ENCODE measurements at regions of chr2 and their contacts with region 1.

Region 1: DNA sequence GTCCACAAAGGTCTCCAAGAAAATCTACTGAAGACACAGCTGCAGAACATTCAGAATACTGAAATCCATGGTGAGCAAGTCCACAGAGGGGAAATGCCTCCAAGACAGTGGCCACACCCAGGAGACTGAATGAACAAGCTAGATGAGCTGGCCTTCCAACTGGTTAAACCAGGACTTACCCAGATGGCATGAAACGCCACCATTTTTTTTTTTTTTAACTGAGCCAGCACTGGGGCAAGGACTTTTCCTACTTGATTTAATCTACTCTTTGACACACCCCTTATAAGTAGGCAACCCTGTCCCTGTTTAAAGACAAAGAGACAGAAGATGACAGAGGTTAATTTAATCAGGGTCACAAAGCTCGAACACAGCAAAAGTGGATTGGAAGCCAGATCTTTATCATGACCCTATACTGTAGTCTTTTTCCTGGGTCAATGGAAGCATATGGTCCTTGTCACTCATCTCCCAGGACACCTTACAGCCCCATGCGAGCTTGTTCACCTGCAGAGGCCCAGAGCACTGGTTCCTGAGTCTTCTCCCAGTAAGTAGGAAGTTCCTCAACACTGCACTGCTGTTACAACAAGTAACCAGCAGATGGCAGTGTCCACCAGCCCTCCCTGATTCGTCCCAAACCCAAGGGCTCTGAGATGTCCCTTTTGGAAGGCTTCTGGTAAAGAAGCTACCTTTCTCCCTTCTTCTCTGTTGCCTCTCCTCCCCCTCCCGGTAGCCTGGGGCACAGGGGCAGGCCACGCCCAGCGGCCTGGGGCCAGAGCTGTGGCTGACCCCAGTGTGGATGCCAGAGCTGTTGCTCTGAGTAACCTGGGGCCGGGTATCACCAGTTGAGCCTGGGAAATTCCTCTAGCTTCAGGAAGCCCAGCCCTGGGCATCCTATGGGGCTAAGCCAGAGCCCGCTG is 5.6 kb upstream of the GDF7 start:
- DNase-seq: no peak
- H3K4me3 ChIP-seq: no peak overlapping the region
- H3K27me3 ChIP-seq: peaks cover 36% of the 10 kb centered on the region
- CTCF ChIP-seq: peak; percentile 96

Region 2: GRCh38 chr2:20304411-20304810 is 356.9 kb before region 1 on chr2:
- CTCF ChIA-PET with region 1: no interaction called
- POLR2A ChIA-PET with region 1: no interaction called
- DNase-seq: no peak
- H3K4me3 ChIP-seq: no peak overlapping the region
- H3K27me3 ChIP-seq: no peaks in the 10 kb centered on the region
- CTCF ChIP-seq: no peak

Region 3: GRCh38 chr2:20617892-20618467 is 43.3 kb before region 1 on chr2:
- CTCF ChIA-PET with region 1: no interaction called
- POLR2A ChIA-PET with region 1: no interaction called
- DNase-seq: peak; percentile 90
- H3K4me3 ChIP-seq: no peak overlapping the region
- H3K27me3 ChIP-seq: no peaks in the 10 kb centered on the region
- CTCF ChIP-seq: peak; percentile 58

Region 4: DNA sequence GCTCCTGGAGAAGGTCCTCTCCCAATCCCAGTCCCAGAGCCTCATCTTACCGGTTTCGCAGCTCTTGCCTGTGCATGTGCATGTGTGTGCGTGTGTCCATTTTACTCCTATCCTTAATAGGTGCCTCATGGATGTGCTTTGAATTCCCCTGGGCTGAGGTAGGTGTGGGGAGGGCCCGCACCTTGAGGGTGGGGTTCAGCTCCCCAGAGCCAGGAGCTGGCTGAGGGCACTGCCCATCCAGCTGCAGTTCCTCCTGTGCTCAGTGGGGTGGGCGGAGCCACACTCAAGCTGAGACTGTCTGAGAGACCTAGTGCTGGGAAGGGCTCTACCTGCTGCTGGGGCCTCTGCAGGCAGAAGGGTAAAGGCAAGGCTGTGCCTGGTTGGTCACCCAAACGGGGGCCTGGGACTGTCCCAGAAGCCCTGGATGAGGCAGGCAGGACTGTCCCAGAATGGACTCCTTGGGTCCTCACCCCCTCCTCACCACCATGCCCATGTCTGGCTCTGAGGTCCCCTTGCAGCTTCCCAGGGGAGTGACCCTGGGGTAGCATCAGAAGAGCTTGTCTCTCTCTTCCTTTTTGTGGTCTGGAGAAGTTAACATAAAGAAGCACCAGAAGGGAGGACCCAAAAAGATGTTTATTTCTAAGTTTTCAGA is 14.5 kb after region 1 on chr2:
- CTCF ChIA-PET with region 1: interaction called, 123 read pairs
- POLR2A ChIA-PET with region 1: interaction called, 4 read pairs
- DNase-seq: no peak
- H3K4me3 ChIP-seq: no peak overlapping the region
- H3K27me3 ChIP-seq: peaks cover 1% of the 10 kb centered on the region; the same call in 1 of the 2 replicates
- CTCF ChIP-seq: no peak

Region 5: DNA sequence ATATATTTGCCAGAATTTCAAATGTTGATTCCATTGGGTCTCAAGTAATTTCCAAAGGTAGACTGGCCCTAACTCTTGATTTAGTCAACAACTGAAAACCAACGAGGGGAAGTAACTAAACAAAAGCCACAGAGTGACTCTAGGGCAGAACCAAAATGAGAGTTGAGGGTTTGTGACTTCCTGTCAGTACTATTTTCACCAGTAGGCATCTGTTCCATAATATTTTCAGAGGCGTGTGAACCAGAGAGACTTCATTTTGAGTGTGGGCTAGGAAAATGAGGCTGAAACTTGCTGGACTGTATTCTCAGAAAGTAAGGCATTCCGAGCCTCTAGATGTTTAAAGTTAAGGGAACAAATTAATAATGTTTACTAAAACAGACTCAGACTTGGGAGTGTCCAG is 76.2 kb after region 1 on chr2:
- CTCF ChIA-PET with region 1: no interaction called
- POLR2A ChIA-PET with region 1: no interaction called
- DNase-seq: no peak
- H3K4me3 ChIP-seq: no peak overlapping the region
- H3K27me3 ChIP-seq: no peaks in the 10 kb centered on the region
- CTCF ChIP-seq: no peak

Region 6: GRCh38 chr2:20916604-20917286 is 255.4 kb after region 1 on chr2:
- CTCF ChIA-PET with region 1: interaction called, 22 read pairs
- POLR2A ChIA-PET with region 1: no interaction called
- DNase-seq: no peak
- H3K4me3 ChIP-seq: no peak overlapping the region
- H3K27me3 ChIP-seq: no peaks in the 10 kb centered on the region
- CTCF ChIP-seq: peak; percentile 53

Region 7: GRCh38 chr2:20962939-20963557 is 301.7 kb after region 1 on chr2:
- CTCF ChIA-PET with region 1: interaction called, 221 read pairs
- POLR2A ChIA-PET with region 1: no interaction called
- DNase-seq: no peak
- H3K4me3 ChIP-seq: no peak overlapping the region
- H3K27me3 ChIP-seq: peaks cover 3% of the 10 kb centered on the region
- CTCF ChIP-seq: peak; percentile 87

Region 8: GRCh38 chr2:21118302-21118920 is 457.1 kb after region 1 on chr2:
- CTCF ChIA-PET with region 1: interaction called, 28 read pairs
- POLR2A ChIA-PET with region 1: no interaction called
- DNase-seq: no peak
- H3K4me3 ChIP-seq: no peak overlapping the region
- H3K27me3 ChIP-seq: no peaks in the 10 kb centered on the region
- CTCF ChIP-seq: peak; percentile 46

Region 9: DNA sequence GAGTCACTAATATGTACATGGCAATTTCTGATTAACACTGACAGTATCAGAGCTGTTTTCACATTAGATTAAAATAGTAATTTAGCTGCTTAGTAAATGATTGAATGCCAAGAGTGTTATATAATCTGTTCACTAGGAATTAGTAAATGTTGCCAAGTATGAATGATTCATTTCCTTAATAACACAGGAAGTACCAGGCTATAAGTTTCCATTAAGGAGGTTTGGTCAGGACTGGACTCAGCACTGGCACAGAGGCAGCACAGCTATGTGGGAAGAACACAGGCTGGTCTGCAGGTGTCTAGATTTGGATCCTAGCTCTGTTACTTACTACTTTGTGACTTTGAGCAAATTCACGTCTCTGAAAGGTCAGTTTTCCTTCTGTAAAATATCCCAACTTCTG is 559.6 kb after region 1 on chr2:
- CTCF ChIA-PET with region 1: no interaction called
- POLR2A ChIA-PET with region 1: no interaction called
- DNase-seq: no peak
- H3K4me3 ChIP-seq: no peak overlapping the region
- H3K27me3 ChIP-seq: no peaks in the 10 kb centered on the region
- CTCF ChIP-seq: no peak